ENCODE measurements at regions of chr4 and their contacts with region 1.

Region 1: GRCh38 chr4:122922877-122923511 is 597 bp upstream of the NUDT6 start:
- DNase-seq: peak; percentile 83 to 90 (median 85)
- H3K4me3 ChIP-seq: peak overlapping the region; percentile 92 to 94
- H3K4me3 Mint-ChIP-seq: peak overlapping the region in 5 of 8 donors; percentile 93 to 100 (median 99)
- H3K27ac ChIP-seq: peak overlapping the region; percentile 66
- H3K27ac Mint-ChIP-seq: peak overlapping the region; percentile 90 to 99 (median 98)
- H3K4me1 ChIP-seq: peaks cover 28% of the 10 kb centered on the region
- H3K4me1 Mint-ChIP-seq: peaks cover 0 to 14% (median 6%) of the 10 kb centered on the region in 4 donors
- H3K27me3 ChIP-seq: no peaks in the 10 kb centered on the region
- H3K27me3 Mint-ChIP-seq: no peaks in the 10 kb centered on the region

Region 2: DNA sequence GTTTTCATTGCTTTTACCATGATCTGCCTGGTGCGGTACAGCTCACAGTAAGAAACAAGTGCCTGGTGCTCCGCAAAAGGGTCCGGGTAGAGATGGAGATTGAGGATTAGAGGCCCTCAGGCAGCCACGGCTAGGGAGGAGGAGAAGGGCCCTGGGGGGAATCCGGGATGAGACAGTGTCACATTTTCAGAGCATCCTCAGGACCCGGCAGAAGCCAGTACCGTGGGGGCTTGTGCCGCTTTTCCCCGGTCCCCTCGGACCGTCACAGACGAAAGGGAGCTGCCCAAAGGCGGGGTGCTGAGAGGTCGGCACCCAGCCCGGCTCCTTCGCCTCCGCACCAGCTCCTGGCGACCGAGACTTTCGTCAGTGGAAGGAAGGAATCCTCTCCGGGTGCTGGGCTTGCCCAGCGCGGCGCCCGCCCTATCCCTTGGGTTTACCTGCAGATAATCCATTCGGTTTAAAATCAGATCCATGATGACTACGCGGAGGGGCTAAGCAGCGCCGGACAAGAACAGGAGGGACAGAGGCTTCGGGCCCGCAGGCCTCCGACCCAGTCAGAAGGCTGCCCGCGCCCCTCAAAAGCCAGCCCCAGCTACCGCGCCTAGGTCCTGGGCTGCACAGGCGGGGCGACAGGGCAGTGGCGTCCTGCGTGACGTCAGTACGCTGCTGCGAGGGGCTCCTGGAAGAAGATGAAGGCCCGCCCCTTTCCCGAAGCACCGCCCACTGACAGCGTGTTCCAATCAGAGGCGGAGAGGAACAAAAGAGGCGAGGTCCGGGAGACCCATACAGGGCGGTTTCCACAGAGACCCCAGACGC is 1052.9 kb before region 1 on chr4 and contains the start of gene BBS7:
- CTCF ChIA-PET with region 1: no interaction called
- POLR2A ChIA-PET with region 1: no interaction called
- intact Hi-C with region 1: loop called (anchors 1 kb)
- DNase-seq: peak; percentile 88 to 95 (median 89)
- H3K4me3 ChIP-seq: peak within 1 kb of the TSS; percentile 92 to 97
- H3K4me3 Mint-ChIP-seq: peak within 1 kb of the TSS; percentile 91 to 98 (median 96)
- H3K27ac ChIP-seq: peak within 1 kb of the TSS; percentile 81
- H3K27ac Mint-ChIP-seq: peak within 1 kb of the TSS; percentile 79 to 98 (median 94)
- H3K4me1 ChIP-seq: peaks cover 19% of the 10 kb centered on the region
- H3K4me1 Mint-ChIP-seq: peaks cover 9 to 30% (median 16%) of the 10 kb centered on the region in 4 donors
- H3K27me3 ChIP-seq: peaks cover 6% of the 10 kb centered on the region
- H3K27me3 Mint-ChIP-seq: peaks cover 4 to 6% of the 10 kb centered on the region in 2 donors
- total RNA-seq, gene BBS7: 8.8 to 10.1 TPM

Region 3: DNA sequence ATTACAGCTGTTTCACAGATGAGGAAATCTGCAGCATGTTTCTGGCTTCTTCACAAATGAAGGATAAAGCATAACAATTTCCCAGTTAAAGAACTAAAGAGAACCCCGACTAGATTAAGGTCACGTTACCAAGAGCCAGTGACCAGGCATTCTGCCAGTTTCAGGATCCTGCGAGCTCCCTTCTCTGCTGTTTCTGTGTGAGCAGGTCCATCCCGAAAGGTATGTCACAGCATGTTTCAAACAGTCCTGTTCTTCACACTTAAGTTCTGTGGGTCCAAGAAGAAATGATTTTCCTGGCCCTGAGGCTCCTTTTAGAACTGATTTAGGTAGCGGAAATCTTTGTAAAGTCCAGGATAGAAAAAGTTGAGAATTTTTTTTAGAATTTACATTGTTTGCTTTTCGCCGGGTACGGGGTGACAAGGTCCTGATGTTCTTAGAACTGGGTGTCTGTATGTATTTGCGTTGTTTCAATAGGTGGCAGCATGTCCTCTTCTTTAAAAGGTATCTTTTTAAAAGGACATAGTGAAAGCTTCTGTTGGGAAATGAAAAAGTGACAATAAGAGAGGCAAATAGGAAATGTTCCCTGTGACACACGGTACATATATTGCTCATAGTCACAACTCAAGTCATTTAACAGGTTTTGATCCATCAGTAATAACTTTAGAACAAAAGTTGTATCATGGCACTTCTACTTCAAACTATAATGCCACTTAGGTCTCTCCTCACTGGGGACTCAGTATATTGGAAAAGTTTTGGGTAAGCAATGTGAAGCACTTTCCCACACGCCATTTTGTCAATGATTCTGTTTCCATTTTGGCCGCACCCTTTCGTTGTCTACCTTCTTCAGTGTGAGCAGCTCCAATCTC is 320.5 kb before region 1 on chr4:
- CTCF ChIA-PET with region 1: no interaction called
- POLR2A ChIA-PET with region 1: no interaction called
- intact Hi-C with region 1: loop called (anchors 5 kb)
- DNase-seq: peak in 3 of 5 donors; percentile 24 to 30 (median 28)
- H3K4me3 ChIP-seq: no peak overlapping the region
- H3K4me3 Mint-ChIP-seq: peak overlapping the region in 1 of 8 donors; percentile 0
- H3K27ac ChIP-seq: no peak overlapping the region
- H3K27ac Mint-ChIP-seq: no peak overlapping the region
- H3K4me1 ChIP-seq: no peaks in the 10 kb centered on the region
- H3K4me1 Mint-ChIP-seq: peaks cover 0 to 5% (median 2%) of the 10 kb centered on the region in 4 donors
- H3K27me3 ChIP-seq: no peaks in the 10 kb centered on the region
- H3K27me3 Mint-ChIP-seq: peaks cover 0 to 9% of the 10 kb centered on the region in 2 donors

Region 4: DNA sequence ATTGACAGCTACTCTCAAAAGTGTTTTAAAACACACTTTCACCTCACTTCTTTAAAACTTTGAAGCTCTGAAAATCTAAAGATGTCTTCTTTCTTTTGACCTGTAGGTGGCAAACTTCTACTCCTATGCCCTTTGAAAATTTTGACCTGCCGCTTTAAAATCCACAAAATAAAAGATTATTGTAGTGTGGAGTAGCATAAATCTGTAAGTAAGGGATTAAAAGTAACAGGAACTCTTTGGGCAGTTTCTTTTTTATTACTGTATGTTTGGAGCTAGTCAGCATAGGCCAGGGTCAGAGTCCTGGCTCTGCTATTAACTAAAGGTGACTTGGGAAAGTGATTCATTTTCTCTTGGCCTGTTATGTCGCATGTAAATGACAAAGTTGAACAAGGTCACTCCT is 165.0 kb before region 1 on chr4:
- CTCF ChIA-PET with region 1: interaction called, 54 read pairs
- POLR2A ChIA-PET with region 1: interaction called, 3 read pairs
- intact Hi-C with region 1: loop called (anchors 2 kb)
- DNase-seq: peak in 4 of 5 donors; percentile 26 to 39 (median 31)
- H3K4me3 ChIP-seq: no peak overlapping the region
- H3K4me3 Mint-ChIP-seq: no peak overlapping the region
- H3K27ac ChIP-seq: no peak overlapping the region
- H3K27ac Mint-ChIP-seq: no peak overlapping the region
- H3K4me1 ChIP-seq: peaks cover 14% of the 10 kb centered on the region
- H3K4me1 Mint-ChIP-seq: peaks cover 10 to 15% (median 10%) of the 10 kb centered on the region in 4 donors
- H3K27me3 ChIP-seq: no peaks in the 10 kb centered on the region
- H3K27me3 Mint-ChIP-seq: peaks cover 7 to 8% of the 10 kb centered on the region in 2 donors

Region 5: DNA sequence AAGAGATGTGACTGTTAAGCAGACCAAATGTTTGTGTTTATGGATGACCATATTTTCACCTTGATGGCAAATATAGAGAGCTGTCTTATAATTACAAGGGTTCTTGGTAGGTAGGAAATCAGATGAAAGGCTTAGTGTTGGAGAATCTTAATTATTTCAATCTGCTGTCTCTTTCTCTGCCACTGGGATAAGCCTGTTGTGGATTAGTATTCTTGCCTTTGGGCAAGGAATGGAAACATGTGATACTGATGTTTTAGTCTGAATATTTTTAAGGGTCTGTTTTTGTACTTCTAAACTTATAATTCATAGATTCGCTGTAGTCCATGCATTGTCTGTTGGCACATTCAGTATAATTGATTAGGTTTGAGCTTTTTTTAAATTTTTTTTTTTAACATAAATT is 23.1 kb after region 1 on chr4:
- CTCF ChIA-PET with region 1: interaction called, 3 read pairs
- POLR2A ChIA-PET with region 1: no interaction called
- intact Hi-C with region 1: loop called (anchors 1 kb)
- DNase-seq: no peak
- H3K4me3 ChIP-seq: no peak overlapping the region
- H3K4me3 Mint-ChIP-seq: peak overlapping the region in 1 of 8 donors; percentile 32
- H3K27ac ChIP-seq: no peak overlapping the region
- H3K27ac Mint-ChIP-seq: peak overlapping the region in 1 of 7 donors; percentile 80
- H3K4me1 ChIP-seq: peaks cover 7% of the 10 kb centered on the region
- H3K4me1 Mint-ChIP-seq: peaks cover 8 to 16% (median 12%) of the 10 kb centered on the region in 4 donors
- H3K27me3 ChIP-seq: no peaks in the 10 kb centered on the region
- H3K27me3 Mint-ChIP-seq: no peaks in the 10 kb centered on the region

Measured in CD4-positive, alpha-beta memory T cell (primary cell).